ENCODE measurements at regions of chr10 and their contacts with region 1.

Region 1: GRCh38 chr10:33330543-33331378 is 3.7 kb downstream of the NRP1 start:
- ATAC-seq: peak; percentile 8 to 27 (median 19)
- H3K4me3 ChIP-seq: peak overlapping the region; percentile 59 to 95 (median 69)
- H3K27ac ChIP-seq: no peak overlapping the region
- H3K4me1 ChIP-seq: peaks cover 9 to 42% of the 10 kb centered on the region in 2 donors

Region 2: DNA sequence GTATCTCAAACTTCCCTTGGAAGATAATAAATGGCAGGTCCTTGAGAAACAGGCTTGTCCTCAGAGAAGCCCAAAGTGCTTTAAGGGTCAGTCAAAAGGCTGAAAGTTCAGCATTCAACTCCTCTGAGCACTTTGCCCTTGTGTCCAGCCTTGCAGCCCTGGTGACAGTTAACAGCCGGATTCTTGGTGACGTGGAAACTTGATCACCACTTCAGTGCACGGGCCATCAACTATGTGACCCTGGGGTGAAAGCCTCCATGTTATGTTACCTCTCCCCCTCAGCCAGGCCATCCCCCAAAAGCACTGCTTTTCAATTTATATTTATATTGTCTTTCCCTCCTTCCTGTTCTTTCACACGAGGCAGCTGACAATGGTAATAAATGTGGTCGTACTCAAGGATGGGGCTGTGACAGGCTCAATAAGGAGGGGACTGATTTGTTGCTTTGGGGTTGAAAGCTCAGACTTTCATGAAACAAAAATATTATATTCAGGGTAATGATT is 167.7 kb after region 1 on chr10:
- in situ Hi-C with region 1: no loop called
- ATAC-seq: peak in 5 of 8 experiments; percentile 43 to 92 (median 87)
- H3K4me3 ChIP-seq: no peak overlapping the region
- H3K27ac ChIP-seq: no peak overlapping the region
- H3K4me1 ChIP-seq: peaks cover 11 to 13% of the 10 kb centered on the region in 2 donors

Region 3: DNA sequence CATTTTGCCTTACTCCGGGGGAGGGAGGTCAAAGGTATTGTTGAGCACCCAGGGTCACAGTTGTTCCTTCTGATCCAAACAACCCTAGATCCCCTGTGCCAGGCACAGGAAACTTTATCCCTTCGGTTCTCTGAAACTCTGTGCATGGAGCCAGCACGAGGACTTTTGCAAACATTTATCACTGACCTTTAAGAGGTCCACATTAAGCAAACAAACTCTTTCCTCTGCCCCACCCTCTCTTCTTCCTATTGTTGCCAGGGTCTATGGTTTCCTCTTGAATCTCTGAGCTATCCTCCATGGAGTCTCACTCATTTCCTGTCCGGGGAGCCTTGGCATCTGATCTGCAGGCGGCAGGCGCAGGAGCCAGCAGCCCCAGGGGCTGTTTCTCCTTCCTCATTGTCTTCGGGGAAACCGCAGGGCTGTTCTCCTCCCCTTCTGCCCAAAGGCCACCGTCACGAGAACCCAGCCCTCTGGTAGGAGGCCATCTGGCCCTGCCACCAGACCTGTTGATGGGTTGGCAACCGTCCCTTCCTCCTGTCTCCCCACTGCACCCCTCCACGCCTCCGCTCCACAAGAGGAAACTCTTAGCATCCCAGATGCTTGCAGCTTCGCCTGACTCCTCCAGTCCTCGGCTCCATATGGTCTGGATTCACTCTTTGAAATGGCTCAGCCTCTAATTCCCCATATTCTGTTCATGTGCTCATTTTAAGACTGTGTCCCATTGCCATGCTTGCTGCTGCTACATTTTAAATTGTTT is 331.0 kb after region 1 on chr10:
- in situ Hi-C with region 1: loop called in 1 of 9 experiments (anchors 25 kb)
- ATAC-seq: peak in 3 of 8 experiments; percentile 92 to 93 (median 92)
- H3K4me3 ChIP-seq: no peak overlapping the region
- H3K27ac ChIP-seq: no peak overlapping the region
- H3K4me1 ChIP-seq: peaks cover 8 to 28% of the 10 kb centered on the region in 2 donors